AG04449 (cell line): ENCODE measurements at regions of chr6 and their contacts with region 1.

Region 1: DNA sequence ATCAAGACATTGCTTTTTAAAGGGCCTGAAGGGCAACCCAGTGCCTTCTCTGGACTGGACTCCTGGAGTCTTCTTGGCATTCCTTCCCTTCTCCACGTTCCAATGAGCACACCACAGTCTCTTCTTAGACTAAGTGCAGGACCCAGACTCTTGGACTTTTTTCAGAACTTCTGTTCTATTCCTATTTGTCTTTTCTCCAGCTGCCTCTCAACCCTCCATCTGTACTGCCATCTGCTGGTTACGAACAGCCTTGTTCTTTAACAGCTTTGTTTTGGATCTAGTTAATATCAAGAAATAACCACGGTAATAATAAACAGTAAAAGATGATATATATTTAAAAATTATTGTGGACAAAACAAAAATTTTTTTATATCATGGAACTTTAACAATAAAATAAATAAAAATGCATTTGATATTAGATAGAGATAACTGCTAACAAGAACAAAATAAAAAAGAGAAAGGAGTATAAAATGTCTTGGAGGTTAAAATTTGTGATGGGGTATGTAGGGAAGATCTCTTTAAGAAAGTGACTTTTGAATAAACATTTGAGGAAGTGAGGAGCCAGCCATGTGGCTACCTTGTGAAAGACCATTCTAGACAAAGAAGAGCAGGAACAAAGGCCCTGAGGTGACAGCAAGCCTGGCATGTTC is 105.1 kb upstream of the HCRTR2 start:
- DNase-seq: no peak
- H3K4me3 ChIP-seq: no peak overlapping the region
- CTCF ChIP-seq: peak; percentile 59

Region 2: DNA sequence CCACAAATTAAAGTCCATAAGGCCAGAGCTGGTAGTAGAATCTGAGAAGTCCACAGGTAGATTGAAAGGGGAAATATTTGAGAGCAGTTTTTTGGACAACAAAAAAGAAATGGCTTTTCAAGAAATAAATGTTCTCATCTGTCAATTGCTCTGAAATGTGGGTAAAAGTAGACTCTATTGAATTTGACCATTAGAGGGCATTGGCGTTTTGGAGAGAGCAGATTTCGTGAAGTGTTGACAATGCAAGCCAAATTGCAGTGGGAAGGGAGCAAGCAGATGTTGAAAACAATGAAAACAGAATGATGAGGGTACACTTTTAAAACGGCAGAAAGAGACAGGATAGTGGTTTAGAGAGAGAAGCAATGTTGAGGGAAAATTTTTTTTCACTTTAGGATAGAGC is 371.8 kb before region 1 on chr6:
- CTCF ChIA-PET with region 1: interaction called, 14 read pairs
- POLR2A ChIA-PET with region 1: no interaction called
- DNase-seq: no peak
- H3K4me3 ChIP-seq: no peak overlapping the region
- CTCF ChIP-seq: peak; percentile 25